ENCODE measurements at regions of chrX and their contacts with region 1.

Region 1: GRCh38 chrX:96979766-96980165 is 96.1 kb downstream of the RPA4 start:
- DNase-seq: no peak
- H3K4me3 ChIP-seq: no peak overlapping the region
- H3K27ac ChIP-seq: no peak overlapping the region
- H3K4me1 ChIP-seq: no peaks in the 10 kb centered on the region
- H3K27me3 ChIP-seq: no peaks in the 10 kb centered on the region
- CTCF ChIP-seq: no peak

Region 2: DNA sequence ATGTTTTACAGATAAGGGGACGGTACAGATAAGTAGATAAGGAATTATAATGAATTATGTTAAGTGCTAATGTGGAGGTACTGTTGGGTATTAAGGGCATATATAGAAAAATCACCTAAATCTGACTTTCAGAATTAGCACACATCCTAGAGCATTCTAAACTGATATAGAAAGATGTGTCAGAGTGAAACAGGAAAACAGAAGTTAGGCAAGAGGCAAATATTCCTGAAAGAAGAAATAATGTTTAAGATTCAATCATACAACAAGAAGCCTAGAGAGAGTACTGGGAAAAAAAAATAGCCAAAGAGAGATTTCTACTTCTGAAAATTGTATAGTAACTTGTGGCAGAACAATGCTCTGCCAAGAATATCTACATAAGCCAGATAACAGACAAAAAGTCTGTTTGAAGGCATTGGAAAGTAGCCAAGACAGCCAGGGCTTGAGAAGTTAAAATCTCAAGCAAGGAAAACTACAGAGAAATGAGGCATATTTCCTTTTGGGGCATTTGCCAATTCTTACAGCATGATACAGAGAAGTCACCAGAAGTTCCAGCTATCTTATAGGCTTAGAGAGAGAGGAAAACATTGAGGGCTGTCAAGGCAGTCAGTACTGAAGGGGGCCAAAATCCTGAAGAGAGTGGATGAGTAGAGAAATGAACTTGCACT is 549.9 kb after region 1 on chrX:
- intact Hi-C with region 1: loop called (anchors 10 kb)
- DNase-seq: no peak
- H3K4me3 ChIP-seq: no peak overlapping the region
- H3K27ac ChIP-seq: no peak overlapping the region
- H3K4me1 ChIP-seq: no peaks in the 10 kb centered on the region
- H3K27me3 ChIP-seq: no peaks in the 10 kb centered on the region
- CTCF ChIP-seq: no peak